ENCODE measurements at regions of chr5 and their contacts with region 1.

Region 1: GRCh38 chr5:134577796-134578363 is 52.4 kb downstream of the JADE2 start:
- DNase-seq: peak; percentile 85 to 91
- H3K4me3 ChIP-seq: no peak overlapping the region
- H3K27ac ChIP-seq: no peak overlapping the region
- H3K4me1 ChIP-seq: peaks cover 12 to 46% (median 33%) of the 10 kb centered on the region in 4 donors
- H3K27me3 ChIP-seq: no peaks in the 10 kb centered on the region
- CTCF ChIP-seq: peak in 5 of 7 experiments; percentile 78 to 85 (median 83)
- EP300 ChIP-seq: no peak
- POLR2A ChIP-seq: no peak

Region 2: GRCh38 chr5:134304311-134304710 is 273.6 kb before region 1 on chr5:
- intact Hi-C with region 1: loop called (anchors 5 kb)
- DNase-seq: no peak
- H3K4me3 ChIP-seq: no peak overlapping the region
- H3K27ac ChIP-seq: no peak overlapping the region
- H3K4me1 ChIP-seq: peaks cover 0 to 10% (median 3%) of the 10 kb centered on the region in 4 donors
- H3K27me3 ChIP-seq: no peaks in the 10 kb centered on the region
- CTCF ChIP-seq: no peak
- EP300 ChIP-seq: no peak
- POLR2A ChIP-seq: no peak

Region 3: DNA sequence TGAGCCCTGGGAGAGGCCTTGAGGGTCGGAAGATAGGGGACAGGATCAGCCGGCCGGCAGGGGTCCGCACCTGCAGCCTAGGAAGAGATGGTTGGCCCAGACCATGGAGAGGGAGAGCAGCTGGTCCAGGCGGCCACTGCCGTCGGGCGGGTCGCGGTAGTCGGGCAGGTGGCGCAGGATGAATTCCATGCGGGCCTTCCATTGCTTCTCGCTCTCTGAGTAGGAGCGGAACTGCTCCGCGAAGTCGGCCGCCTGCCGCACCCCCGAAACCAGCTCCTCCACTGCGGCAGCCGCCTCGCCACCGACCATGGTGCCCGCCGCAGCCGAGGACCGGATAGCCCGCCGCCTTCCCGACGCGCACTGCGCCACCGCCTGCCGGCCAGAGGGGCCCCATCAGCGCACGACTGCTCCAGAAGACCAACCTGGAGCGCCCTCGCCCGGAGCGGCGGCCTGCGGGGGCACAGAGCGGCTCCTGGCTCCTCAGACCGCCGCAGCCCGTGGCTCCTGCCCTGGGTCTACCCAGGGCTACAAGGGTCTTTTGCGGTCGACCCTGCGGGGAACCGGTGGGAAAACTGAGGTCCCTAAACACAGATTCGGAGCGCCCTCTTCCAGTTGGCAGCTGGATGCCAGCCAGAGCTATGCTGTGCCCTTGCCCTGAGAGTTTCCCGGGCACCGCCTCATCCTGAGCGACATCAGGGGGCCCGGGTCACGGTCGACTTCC is 166.2 kb before region 1 on chr5 and contains the start of gene CDKN2AIPNL:
- intact Hi-C with region 1: loop called (anchors 10 kb)
- DNase-seq: peak; percentile 94 to 97
- H3K4me3 ChIP-seq: peak within 1 kb of the TSS; percentile 65 to 94 (median 82)
- H3K27ac ChIP-seq: peak within 1 kb of the TSS; percentile 80 to 90 (median 85)
- H3K4me1 ChIP-seq: peaks cover 15 to 39% (median 29%) of the 10 kb centered on the region in 4 donors
- H3K27me3 ChIP-seq: no peaks in the 10 kb centered on the region
- CTCF ChIP-seq: peak in 5 of 7 experiments; percentile 61 to 87 (median 76)
- EP300 ChIP-seq: no peak
- POLR2A ChIP-seq: peak in 1 of 4 donors; percentile 30
- total RNA-seq, gene CDKN2AIPNL: 2.0 to 44.3 (median 22.2) TPM

Region 4: DNA sequence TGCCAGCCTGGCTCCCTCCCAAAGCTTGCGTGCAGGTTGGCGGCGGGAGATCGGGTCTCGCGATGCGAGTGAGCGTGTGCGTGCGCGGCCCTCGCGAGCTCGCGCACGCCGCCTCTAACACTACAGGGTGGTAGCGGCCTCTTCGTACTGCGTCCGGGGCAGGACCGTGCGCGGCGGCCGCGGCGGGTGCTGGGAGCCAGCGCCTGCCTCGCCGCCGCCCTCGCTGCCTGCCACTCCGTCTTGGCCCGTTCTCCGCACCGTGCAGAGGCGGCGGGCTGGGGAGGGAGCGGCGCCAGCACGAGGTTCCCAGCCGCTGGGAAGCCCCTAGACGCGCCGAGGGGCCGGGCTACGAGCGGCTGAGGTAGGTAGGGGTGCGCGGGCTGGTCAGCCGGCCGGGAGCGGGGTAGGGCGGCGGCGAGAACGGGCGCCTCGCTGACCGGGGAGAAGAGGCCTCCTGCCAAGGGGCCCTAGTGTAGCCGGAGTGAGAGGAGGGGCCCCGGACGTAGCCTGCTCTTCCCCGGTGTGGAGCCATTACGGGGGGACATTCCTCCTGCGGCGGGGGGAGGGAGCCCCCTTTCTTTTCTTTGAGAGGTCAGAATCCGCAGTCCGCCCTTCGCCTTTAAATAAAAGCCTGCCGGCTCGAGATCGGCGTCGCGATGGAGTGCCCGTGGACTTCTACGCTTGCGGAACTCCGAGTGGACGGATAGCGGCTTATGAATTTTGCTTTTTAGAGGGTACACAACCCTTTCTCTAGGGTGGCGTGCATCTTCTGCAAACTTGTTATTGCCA is 268.2 kb after region 1 on chr5 and contains the start of gene C5orf24:
- intact Hi-C with region 1: no loop called
- DNase-seq: peak; percentile 97 to 99
- H3K4me3 ChIP-seq: peak within 1 kb of the TSS; percentile 79 to 95 (median 91)
- H3K27ac ChIP-seq: peak within 1 kb of the TSS; percentile 94 to 98 (median 96)
- H3K4me1 ChIP-seq: peaks cover 43 to 56% (median 52%) of the 10 kb centered on the region in 4 donors
- H3K27me3 ChIP-seq: no peaks in the 10 kb centered on the region
- CTCF ChIP-seq: no peak
- EP300 ChIP-seq: no peak
- POLR2A ChIP-seq: peak in 2 of 4 donors; percentile 51 to 88
- total RNA-seq, gene C5orf24: 28.6 to 54.9 (median 43.9) TPM

Measured in stomach (tissue), 19 donors.